PC-9 (cell line): ENCODE measurements at regions of chr2 and their contacts with region 1.

Region 1: GRCh38 chr2:10285556-10286198 is 17.0 kb upstream of the HPCAL1 start:
- DNase-seq: peak; percentile 93 to 94
- H3K4me3 ChIP-seq: no peak overlapping the region; the same call in 1 of the 2 replicates
- H3K27ac ChIP-seq: peak overlapping the region; percentile 99
- H3K4me1 ChIP-seq: peaks cover 92% of the 10 kb centered on the region
- H3K27me3 ChIP-seq: no peaks in the 10 kb centered on the region
- CTCF ChIP-seq: no peak

Region 2: DNA sequence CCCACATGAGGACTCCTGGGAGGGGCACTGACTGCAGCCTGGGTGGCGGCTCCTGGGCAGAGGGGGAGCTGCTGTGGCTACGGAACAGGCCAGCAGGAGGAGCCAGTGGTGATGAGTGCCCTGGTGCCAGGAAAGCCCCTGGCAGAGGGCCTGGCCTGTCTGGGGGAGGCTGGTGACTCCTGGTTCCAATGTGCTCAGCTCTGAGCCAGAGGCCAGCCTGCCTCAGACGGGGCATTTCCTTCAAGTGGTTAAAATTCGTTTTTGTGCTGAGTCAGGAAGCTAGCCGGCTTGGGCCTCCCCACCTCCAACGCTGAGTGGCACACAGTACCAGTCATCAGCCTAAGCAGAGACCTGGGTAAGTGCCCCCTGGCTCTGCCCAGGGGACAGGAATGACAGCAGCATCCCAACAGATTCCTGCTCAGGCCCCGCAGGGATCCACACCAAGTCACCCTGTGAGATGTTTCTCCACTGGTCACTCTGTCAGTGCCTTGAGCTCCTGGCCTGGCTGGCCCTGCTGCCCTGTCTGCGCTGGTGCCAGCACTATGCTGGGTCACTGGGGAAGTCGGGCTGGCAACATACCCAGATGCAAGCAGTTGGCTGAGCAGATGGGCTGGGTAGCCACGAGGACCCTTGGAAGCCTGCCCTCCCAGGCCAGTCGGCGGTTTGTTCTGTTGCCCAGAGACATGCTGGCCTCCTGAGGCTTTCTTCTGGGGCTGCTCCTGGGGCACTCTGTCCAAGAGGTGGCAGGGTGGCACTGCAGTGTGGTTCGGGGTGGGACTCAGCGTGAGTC is 249.4 kb before region 1 on chr2:
- CTCF ChIA-PET with region 1: no interaction called
- POLR2A ChIA-PET with region 1: no interaction called
- intact Hi-C with region 1: no loop called
- DNase-seq: peak in 1 of 2 experiments; percentile 40
- H3K4me3 ChIP-seq: no peak overlapping the region
- H3K27ac ChIP-seq: no peak overlapping the region
- H3K4me1 ChIP-seq: no peaks in the 10 kb centered on the region
- H3K27me3 ChIP-seq: no peaks in the 10 kb centered on the region
- CTCF ChIP-seq: peak; percentile 58

Region 3: DNA sequence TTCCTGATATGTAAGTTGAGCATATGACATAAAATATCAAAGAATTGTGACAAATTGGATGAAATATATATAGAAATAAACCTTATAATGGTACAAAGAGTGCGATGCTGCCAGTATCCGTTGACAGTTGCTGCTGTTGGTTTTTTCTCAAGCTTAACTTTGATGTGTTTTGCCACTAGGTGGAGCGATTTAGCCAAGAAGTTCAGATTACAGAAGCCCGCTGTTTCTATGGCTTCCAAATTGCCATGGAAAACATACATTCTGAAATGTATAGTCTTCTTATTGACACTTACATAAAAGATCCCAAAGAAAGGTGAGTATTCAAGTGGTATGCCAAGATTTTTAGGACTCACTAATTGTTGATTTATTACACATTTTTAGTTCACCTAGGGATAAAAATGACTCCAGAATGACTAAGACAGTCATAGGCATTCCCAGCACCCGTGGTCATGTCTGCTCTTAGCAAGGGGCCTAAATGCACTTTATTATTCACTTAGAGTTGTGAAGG is 161.1 kb before region 1 on chr2:
- CTCF ChIA-PET with region 1: no interaction called
- POLR2A ChIA-PET with region 1: no interaction called
- intact Hi-C with region 1: no loop called
- DNase-seq: peak; percentile 36 to 69
- H3K4me3 ChIP-seq: peak overlapping the region; percentile 88; the same call in 1 of the 2 replicates
- H3K27ac ChIP-seq: 0 out of 2 replicates have a peak overlapping the region, but pooled peaks have one; percentile 16
- H3K4me1 ChIP-seq: peaks cover 28% of the 10 kb centered on the region
- H3K27me3 ChIP-seq: no peaks in the 10 kb centered on the region
- CTCF ChIP-seq: peak; percentile 92

Region 4: GRCh38 chr2:10256046-10257031 is 29.3 kb before region 1 on chr2:
- CTCF ChIA-PET with region 1: interaction called, 21 read pairs
- POLR2A ChIA-PET with region 1: no interaction called
- intact Hi-C with region 1: no loop called
- DNase-seq: no peak
- H3K4me3 ChIP-seq: no peak overlapping the region
- H3K27ac ChIP-seq: no peak overlapping the region
- H3K4me1 ChIP-seq: peaks cover 15% of the 10 kb centered on the region
- H3K27me3 ChIP-seq: no peaks in the 10 kb centered on the region
- CTCF ChIP-seq: no peak

Region 5: DNA sequence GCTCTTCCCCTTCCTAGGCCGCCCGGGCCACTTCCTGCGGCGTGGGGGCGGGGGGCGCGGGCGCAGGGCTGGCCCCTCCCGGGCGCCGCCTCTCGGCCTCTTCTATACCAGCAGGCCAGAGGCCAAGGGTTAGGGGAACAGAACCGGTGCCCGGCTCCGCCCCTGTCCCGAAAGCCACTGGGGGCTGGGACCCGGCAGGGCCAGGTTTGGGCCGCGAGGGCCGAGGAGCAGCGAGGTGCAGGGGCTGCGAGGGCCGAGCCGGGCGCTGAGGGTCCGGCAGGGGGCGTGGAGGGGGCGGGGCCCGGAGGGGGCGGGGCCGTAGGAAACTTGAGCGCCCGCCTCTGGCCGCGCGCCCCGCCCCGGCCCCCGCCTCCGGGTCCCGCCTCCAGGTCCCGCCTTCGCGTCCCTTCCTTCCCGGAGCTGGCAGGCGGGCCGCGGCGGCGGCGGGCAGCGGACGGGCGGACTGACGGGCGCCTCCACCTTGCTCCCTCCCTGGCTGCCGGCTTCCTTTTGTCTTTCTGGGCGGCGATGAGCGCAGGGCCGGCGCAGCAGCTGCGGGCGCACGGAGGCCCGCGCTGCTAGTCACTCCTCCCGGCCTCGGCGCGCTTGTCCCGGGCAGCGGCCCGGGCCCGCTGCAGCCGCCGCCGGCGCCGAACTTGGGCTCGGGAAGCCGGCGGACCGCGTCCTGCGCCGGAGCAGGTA is 17.0 kb after region 1 on chr2 and contains the start of gene HPCAL1:
- CTCF ChIA-PET with region 1: interaction called, 6 read pairs
- POLR2A ChIA-PET with region 1: interaction called, 4 read pairs
- intact Hi-C with region 1: loop called (anchors 1 kb)
- DNase-seq: peak; percentile 85 to 96
- H3K4me3 ChIP-seq: peak within 1 kb of the TSS; percentile 92
- H3K27ac ChIP-seq: peak within 1 kb of the TSS; percentile 83
- H3K4me1 ChIP-seq: peaks cover 71% of the 10 kb centered on the region
- H3K27me3 ChIP-seq: no peaks in the 10 kb centered on the region
- CTCF ChIP-seq: peak; percentile 63
- total RNA-seq, gene HPCAL1: 91.1 and 105 TPM in 2 replicates

Region 6: GRCh38 chr2:10331027-10331701 is 45.5 kb after region 1 on chr2:
- CTCF ChIA-PET with region 1: interaction called, 3 read pairs
- POLR2A ChIA-PET with region 1: no interaction called
- intact Hi-C with region 1: loop called (anchors 5 kb)
- DNase-seq: peak in 1 of 2 experiments; percentile 93
- H3K4me3 ChIP-seq: no peak overlapping the region
- H3K27ac ChIP-seq: no peak overlapping the region
- H3K4me1 ChIP-seq: peaks cover 17% of the 10 kb centered on the region
- H3K27me3 ChIP-seq: no peaks in the 10 kb centered on the region
- CTCF ChIP-seq: no peak